ENCODE measurements at regions of chr16 and their contacts with region 1.

Region 1: GRCh38 chr16:77722309-77723107 is at the start of gene NUDT7:
- DNase-seq: peak; percentile 85 to 100 (median 95)
- ATAC-seq: peak; percentile 93
- H3K4me3 ChIP-seq: peak within 1 kb of the TSS; percentile 95
- H3K4me3 Mint-ChIP-seq: peak within 1 kb of the TSS; percentile 94
- H3K27ac ChIP-seq: peak within 1 kb of the TSS; percentile 46 to 59
- H3K27ac Mint-ChIP-seq: peak within 1 kb of the TSS; percentile 87
- H3K4me1 ChIP-seq: peaks cover 19% of the 10 kb centered on the region
- H3K4me1 Mint-ChIP-seq: peaks cover 17% of the 10 kb centered on the region
- H3K27me3 ChIP-seq: no peaks in the 10 kb centered on the region
- H3K27me3 Mint-ChIP-seq: no peaks in the 10 kb centered on the region
- CTCF ChIP-seq: no peak
- total RNA-seq, gene NUDT7: 0.93 to 1.5 TPM

Region 2: GRCh38 chr16:76862901-76863300 is 859.6 kb before region 1 on chr16:
- CTCF ChIA-PET with region 1: no interaction called
- POLR2A ChIA-PET with region 1: no interaction called
- intact Hi-C with region 1: no loop called
- DNase-seq: no peak
- ATAC-seq: no peak
- H3K4me3 ChIP-seq: no peak overlapping the region
- H3K4me3 Mint-ChIP-seq: no peak overlapping the region
- H3K27ac ChIP-seq: no peak overlapping the region
- H3K27ac Mint-ChIP-seq: no peak overlapping the region
- H3K4me1 ChIP-seq: no peaks in the 10 kb centered on the region
- H3K4me1 Mint-ChIP-seq: no peaks in the 10 kb centered on the region
- H3K27me3 ChIP-seq: no peaks in the 10 kb centered on the region
- H3K27me3 Mint-ChIP-seq: no peaks in the 10 kb centered on the region
- CTCF ChIP-seq: no peak

Region 3: DNA sequence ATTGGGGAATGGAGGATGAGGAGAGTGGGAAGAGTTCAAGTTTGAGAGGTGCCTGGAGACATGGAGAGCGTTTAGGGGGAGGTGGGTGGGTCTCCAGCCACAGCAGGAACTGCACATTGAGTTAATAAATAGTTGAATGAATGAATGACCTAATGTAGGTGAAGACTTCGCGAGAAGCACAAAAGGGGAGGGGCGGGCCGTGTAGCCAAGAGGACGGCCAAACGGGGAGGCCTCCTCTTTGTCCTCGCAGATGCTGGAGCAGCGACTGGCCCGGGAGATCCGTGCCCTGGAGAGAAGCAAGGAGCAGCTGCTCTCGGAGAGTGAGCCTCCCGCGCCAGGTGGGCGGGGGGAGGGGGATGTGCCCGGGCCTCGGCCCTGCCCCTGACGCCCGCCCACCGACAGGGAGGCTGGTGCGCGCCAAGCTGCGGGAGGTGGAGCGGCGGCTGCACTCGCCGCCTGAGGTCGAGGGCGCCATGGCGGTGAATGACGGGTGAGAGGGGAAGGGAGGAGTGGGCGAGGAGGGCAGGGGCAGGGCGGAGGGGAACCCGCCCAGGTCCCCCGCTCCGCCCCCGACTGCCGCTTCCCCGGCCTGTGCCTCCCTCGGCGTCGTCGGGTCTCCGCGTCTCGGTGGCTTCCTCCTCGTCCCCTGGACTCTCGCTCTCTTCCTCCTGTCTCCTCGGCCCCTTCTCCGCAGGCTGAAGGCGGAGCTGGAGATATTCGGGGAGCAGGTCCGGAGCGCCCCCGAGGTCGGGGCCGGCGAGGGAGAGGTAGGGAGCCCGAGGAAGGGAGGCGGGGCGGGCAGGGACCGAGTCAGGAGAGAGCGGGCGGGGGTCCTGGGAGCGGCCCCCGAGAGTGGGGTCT is 510.4 kb before region 1 on chr16:
- CTCF ChIA-PET with region 1: no interaction called
- POLR2A ChIA-PET with region 1: no interaction called
- intact Hi-C with region 1: loop called in 1 of 2 experiments (anchors 5 kb)
- DNase-seq: peak; percentile 48 to 90 (median 72)
- ATAC-seq: peak; percentile 86
- H3K4me3 ChIP-seq: peak overlapping the region; percentile 85
- H3K4me3 Mint-ChIP-seq: peak overlapping the region; percentile 96
- H3K27ac ChIP-seq: peak overlapping the region; percentile 58 to 74
- H3K27ac Mint-ChIP-seq: peak overlapping the region; percentile 72
- H3K4me1 ChIP-seq: peaks cover 17% of the 10 kb centered on the region
- H3K4me1 Mint-ChIP-seq: peaks cover 16% of the 10 kb centered on the region
- H3K27me3 ChIP-seq: no peaks in the 10 kb centered on the region
- H3K27me3 Mint-ChIP-seq: no peaks in the 10 kb centered on the region
- CTCF ChIP-seq: no peak

Region 4: DNA sequence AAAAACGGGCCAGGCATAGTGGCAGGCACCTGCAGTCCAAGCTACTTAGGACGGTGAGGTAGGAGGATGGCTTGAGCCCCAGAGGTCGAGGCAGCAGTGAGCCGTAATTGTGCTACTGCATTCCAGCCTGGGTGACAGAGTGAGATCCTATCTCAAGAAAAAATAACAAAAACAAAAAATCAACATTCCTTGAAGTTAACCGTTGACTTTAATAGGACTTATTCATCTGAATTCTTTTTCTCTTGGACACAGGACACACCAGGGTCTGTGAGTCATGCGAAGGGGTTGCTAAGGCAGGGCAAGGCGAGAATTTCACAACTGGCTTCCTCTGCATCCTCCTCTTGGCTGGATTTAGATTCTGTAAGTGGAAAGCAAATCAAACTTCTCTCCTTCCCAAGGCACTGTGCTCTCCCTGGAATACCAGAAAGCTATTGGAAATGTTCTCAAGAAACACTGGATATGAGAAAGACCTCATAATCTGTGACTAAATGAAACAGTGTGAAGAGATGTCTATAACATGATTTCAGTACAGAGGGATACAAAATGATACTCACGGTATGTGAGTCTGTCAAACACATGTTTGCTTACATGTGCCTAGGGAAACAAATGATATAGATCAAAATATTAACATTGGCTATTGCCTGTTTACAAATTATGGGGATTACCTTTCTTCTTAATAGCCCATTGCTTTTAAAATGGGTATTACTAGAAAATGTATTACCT is 423.7 kb before region 1 on chr16:
- CTCF ChIA-PET with region 1: no interaction called
- POLR2A ChIA-PET with region 1: no interaction called
- intact Hi-C with region 1: no loop called
- DNase-seq: no peak
- ATAC-seq: no peak
- H3K4me3 ChIP-seq: no peak overlapping the region
- H3K4me3 Mint-ChIP-seq: no peak overlapping the region
- H3K27ac ChIP-seq: no peak overlapping the region
- H3K27ac Mint-ChIP-seq: no peak overlapping the region
- H3K4me1 ChIP-seq: no peaks in the 10 kb centered on the region
- H3K4me1 Mint-ChIP-seq: no peaks in the 10 kb centered on the region
- H3K27me3 ChIP-seq: no peaks in the 10 kb centered on the region
- H3K27me3 Mint-ChIP-seq: peaks cover 11% of the 10 kb centered on the region
- CTCF ChIP-seq: no peak

Region 5: DNA sequence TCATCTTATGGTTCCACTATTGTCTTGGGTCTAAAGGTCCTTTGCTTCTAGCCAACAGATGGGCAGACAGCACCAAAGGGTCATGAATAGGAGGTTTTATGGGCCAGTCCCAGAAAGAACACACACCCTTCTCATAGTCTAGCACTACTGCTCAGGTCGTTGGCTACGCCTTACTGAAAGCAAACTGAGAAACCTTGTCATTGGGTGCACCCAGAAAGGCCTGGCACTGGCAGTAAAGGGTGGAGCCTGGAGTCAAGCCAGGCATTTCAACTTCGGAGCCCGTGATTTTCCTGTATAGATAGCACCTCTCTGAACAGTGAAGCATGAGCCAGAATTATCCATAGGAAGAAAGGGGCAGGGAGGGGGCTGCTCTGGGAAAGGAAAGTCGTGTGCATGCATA is 140.7 kb after region 1 on chr16:
- CTCF ChIA-PET with region 1: no interaction called
- POLR2A ChIA-PET with region 1: no interaction called
- intact Hi-C with region 1: no loop called
- DNase-seq: no peak
- ATAC-seq: no peak
- H3K4me3 ChIP-seq: no peak overlapping the region
- H3K4me3 Mint-ChIP-seq: no peak overlapping the region
- H3K27ac ChIP-seq: no peak overlapping the region
- H3K27ac Mint-ChIP-seq: no peak overlapping the region
- H3K4me1 ChIP-seq: no peaks in the 10 kb centered on the region
- H3K4me1 Mint-ChIP-seq: peaks cover 3% of the 10 kb centered on the region
- H3K27me3 ChIP-seq: no peaks in the 10 kb centered on the region
- H3K27me3 Mint-ChIP-seq: peaks cover 20% of the 10 kb centered on the region
- CTCF ChIP-seq: no peak

Region 6: DNA sequence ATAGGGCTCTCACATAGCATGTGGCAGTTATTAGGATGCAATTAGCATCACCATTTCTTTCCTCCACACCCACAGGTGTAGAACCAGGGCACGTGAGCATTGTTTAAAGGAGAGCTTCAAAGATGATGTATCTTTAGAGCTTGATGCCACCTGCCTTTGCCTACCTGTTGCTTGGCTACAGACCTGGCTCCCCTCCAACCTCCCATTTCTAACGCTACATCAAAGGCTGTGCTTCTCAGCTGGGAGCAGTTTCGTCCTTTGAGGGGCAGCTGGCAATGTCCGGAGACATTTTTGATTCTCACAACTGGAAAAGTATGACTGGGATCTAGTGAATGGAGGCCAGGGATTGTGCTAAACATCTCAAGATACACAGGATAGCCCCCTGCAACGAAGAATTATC is 221.3 kb after region 1 on chr16:
- CTCF ChIA-PET with region 1: no interaction called
- POLR2A ChIA-PET with region 1: no interaction called
- intact Hi-C with region 1: no loop called
- DNase-seq: no peak
- ATAC-seq: no peak
- H3K4me3 ChIP-seq: no peak overlapping the region
- H3K4me3 Mint-ChIP-seq: no peak overlapping the region
- H3K27ac ChIP-seq: no peak overlapping the region
- H3K27ac Mint-ChIP-seq: no peak overlapping the region
- H3K4me1 ChIP-seq: no peaks in the 10 kb centered on the region
- H3K4me1 Mint-ChIP-seq: no peaks in the 10 kb centered on the region
- H3K27me3 ChIP-seq: peaks cover 2 to 15% of the 10 kb centered on the region in 2 experiments
- H3K27me3 Mint-ChIP-seq: peaks cover 20% of the 10 kb centered on the region
- CTCF ChIP-seq: no peak